ENCODE measurements at regions of chr19 and their contacts with region 1.

Region 1: DNA sequence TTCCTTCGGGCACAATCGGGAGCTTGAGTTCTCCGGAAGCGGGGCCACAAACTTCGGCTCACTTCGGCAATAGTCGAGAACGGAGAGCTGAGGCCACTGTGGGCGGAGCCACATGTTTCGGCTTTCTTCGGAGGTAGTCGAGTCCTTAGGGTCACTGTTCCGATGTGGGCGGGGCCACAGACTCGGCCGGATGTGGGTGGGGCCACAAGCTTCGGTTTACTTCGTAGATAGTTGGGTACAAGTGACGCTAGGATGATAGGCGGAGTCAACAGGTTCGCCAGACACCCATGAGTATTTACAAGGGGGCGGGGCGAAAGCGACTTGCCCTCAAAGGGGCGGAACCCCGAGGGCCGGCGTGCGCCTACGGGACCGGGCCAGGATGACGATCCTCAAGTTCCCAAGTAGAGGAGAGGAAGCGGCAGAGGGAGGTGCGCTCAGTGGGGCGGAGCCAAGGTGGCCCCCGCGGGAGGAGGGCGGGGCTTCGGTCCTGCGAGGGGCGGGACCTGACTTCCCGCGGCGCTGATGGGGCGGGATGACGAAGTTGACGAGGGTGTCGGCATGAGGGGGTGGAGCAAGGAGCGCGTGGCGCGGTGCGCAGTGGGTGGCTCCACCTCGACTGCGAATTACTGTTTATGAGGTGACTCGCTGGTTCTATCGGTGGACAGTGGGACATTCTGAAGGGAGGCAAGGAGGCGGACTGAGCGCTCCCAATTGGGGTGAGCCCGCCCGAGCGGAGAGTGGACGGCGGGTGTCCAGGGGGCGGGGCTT is 539 bp upstream of the MBOAT7 start:
- DNase-seq: peak; percentile 100
- H3K4me3 ChIP-seq: peak overlapping the region; percentile 63 to 97 (median 89)
- H3K4me3 Mint-ChIP-seq: peak overlapping the region; percentile 93 to 95
- H3K27ac ChIP-seq: peak overlapping the region; percentile 98 to 99
- H3K27ac Mint-ChIP-seq: peak overlapping the region; percentile 99 to 100 (median 100)
- H3K4me1 ChIP-seq: peaks cover 30 to 47% of the 10 kb centered on the region in 2 donors
- H3K4me1 Mint-ChIP-seq: peaks cover 36% of the 10 kb centered on the region
- H3K27me3 ChIP-seq: no peaks in the 10 kb centered on the region
- H3K27me3 Mint-ChIP-seq: peaks cover 0 to 3% (median 1%) of the 10 kb centered on the region in 3 donors
- CTCF ChIP-seq: no peak

Region 2: DNA sequence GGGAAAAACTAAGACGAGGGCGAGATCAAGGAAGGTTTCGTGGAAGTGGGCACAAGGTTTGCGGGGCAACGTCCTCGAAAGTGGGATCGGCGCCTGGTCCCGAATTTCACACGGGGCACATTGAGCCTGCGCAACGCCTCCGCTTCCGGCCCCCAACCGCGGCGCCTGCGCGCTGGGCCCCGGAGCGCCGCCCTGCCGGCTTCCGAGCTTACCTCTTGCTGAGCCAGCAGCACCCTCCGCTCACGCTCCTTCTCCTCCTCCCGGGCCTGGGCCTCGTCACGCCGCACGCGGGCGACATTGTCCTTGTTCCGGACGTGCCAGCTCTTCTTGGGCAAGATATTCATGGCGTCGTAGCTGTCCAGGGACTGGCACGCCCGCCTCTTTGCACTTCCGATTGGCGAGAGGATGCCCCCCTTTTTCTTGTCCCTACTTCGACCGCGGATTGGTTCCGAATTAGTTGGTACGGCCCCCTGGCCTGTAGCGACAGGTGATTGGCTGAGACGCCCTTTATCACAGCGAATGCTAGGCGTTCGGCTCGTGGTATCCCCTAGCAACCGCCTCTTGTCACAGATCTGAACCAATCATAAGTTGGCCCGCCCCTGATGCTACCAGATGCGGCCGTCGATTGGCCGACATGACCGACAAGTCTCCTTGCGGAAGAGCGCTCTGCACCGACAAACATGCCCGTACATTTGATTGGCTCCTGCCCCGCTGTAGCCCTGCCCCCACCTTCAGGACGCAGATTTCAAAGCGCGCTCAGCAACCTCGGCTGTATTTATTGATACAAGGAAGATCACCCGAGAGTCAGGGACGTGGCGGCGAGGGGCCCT is 30.4 kb before region 1 on chr19 and contains the start of gene LENG1:
- intact Hi-C with region 1: loop called in 1 of 2 experiments (anchors 2 kb)
- DNase-seq: peak; percentile 100
- H3K4me3 ChIP-seq: peak within 1 kb of the TSS; percentile 69 to 94 (median 72)
- H3K4me3 Mint-ChIP-seq: peak within 1 kb of the TSS; percentile 88 to 95
- H3K27ac ChIP-seq: peak within 1 kb of the TSS; percentile 78 to 93
- H3K27ac Mint-ChIP-seq: peak within 1 kb of the TSS; percentile 96 to 99 (median 98)
- H3K4me1 ChIP-seq: peaks cover 54 to 62% of the 10 kb centered on the region in 2 donors
- H3K4me1 Mint-ChIP-seq: peaks cover 60% of the 10 kb centered on the region
- H3K27me3 ChIP-seq: peaks cover 0 to 3% of the 10 kb centered on the region in 2 donors
- H3K27me3 Mint-ChIP-seq: peaks cover 0 to 15% (median 7%) of the 10 kb centered on the region in 3 donors
- CTCF ChIP-seq: peak; percentile 19
- polyA plus RNA-seq, gene LENG1: 3.4 to 5.4 (median 4.2) TPM

Region 3: GRCh38 chr19:54231077-54231931 is 41.4 kb after region 1 on chr19:
- intact Hi-C with region 1: loop called in 1 of 2 experiments (anchors 1 kb)
- DNase-seq: peak; percentile 57 to 88 (median 83)
- H3K4me3 ChIP-seq: no peak overlapping the region
- H3K4me3 Mint-ChIP-seq: peak overlapping the region in 1 of 2 donors; percentile 26
- H3K27ac ChIP-seq: no peak overlapping the region
- H3K27ac Mint-ChIP-seq: peak overlapping the region in 5 of 7 donors; percentile 46 to 88 (median 67)
- H3K4me1 ChIP-seq: peaks cover 14 to 20% of the 10 kb centered on the region in 2 donors
- H3K4me1 Mint-ChIP-seq: peaks cover 21% of the 10 kb centered on the region
- H3K27me3 ChIP-seq: peaks cover 0 to 13% of the 10 kb centered on the region in 2 donors
- H3K27me3 Mint-ChIP-seq: peaks cover 6 to 8% (median 7%) of the 10 kb centered on the region in 3 donors
- CTCF ChIP-seq: peak; percentile 89

Region 4: GRCh38 chr19:54448774-54449700 is 259.1 kb after region 1 on chr19 and contains the start of gene LENG8:
- intact Hi-C with region 1: loop called in 1 of 2 experiments (anchors 10 kb)
- DNase-seq: peak; percentile 96 to 99 (median 99)
- H3K4me3 ChIP-seq: peak within 1 kb of the TSS; percentile 57 to 90 (median 69)
- H3K4me3 Mint-ChIP-seq: peak within 1 kb of the TSS; percentile 98 to 99
- H3K27ac ChIP-seq: peak within 1 kb of the TSS; percentile 95 to 98
- H3K27ac Mint-ChIP-seq: peak within 1 kb of the TSS; percentile 99 to 100 (median 100)
- H3K4me1 ChIP-seq: peaks cover 35 to 39% of the 10 kb centered on the region in 2 donors
- H3K4me1 Mint-ChIP-seq: peaks cover 35% of the 10 kb centered on the region
- H3K27me3 ChIP-seq: no peaks in the 10 kb centered on the region
- H3K27me3 Mint-ChIP-seq: peaks cover 0 to 3% (median 2%) of the 10 kb centered on the region in 3 donors
- CTCF ChIP-seq: no peak
- polyA plus RNA-seq, gene LENG8: 3.6 to 341 (median 5.8) TPM

Region 5: DNA sequence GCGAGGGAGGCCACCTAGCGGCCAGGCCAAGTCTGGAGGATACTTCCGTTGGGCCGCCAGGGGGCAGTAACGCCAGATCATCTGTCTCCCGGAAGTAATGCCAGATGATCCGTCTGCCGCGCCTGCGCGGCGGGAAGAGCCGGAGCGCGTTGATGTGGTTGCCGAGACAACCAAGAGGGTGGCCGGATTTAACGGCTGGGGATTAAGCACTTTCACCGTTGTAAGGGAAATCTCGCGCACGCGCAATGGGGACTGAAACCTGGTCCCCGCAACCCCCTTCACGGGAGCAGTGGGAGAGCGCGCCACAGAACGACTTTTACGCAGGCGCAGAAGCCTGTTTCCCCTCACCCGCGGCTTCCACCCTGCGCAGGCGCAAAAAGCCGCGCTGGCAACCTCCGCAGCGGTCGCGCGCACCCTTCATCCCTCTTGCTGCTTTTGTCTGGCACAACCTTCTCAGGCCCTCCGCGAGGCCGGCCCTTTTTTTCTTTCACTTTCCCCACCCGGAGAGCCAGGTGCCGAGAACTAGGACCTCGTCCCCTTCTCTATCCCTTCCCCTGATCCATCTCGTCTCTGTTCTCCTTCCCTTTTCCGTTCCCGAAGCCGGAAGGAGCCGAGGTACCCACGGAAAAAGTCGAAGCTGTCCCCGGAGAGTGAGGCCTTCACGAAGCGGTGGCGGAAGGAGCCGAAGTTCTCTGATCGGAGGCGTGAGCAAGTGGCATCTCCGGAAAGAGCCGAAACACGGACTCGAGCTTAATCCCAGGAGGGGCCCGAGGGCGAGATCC is 1464.0 kb after region 1 on chr19:
- intact Hi-C with region 1: loop called in 1 of 2 experiments (anchors 10 kb)
- DNase-seq: peak; percentile 100
- H3K4me3 ChIP-seq: peak overlapping the region; percentile 66 to 89 (median 86)
- H3K4me3 Mint-ChIP-seq: peak overlapping the region; percentile 98 to 99
- H3K27ac ChIP-seq: peak overlapping the region; percentile 94 to 98
- H3K27ac Mint-ChIP-seq: peak overlapping the region; percentile 96 to 100 (median 100)
- H3K4me1 ChIP-seq: peaks cover 37 to 46% of the 10 kb centered on the region in 2 donors
- H3K4me1 Mint-ChIP-seq: peaks cover 34% of the 10 kb centered on the region
- H3K27me3 ChIP-seq: no peaks in the 10 kb centered on the region
- H3K27me3 Mint-ChIP-seq: peaks cover 2 to 5% (median 4%) of the 10 kb centered on the region in 3 donors
- CTCF ChIP-seq: peak; percentile 100